Naive thymus-derived CD4-positive, alpha-beta T cell (primary cell): ENCODE measurements at regions of chr22 and their contacts with region 1.

Region 1: GRCh38 chr22:50507991-50508884 is at the start of gene NCAPH2:
- DNase-seq: peak; percentile 95 to 99 (median 97)
- ATAC-seq: peak; percentile 86
- H3K4me3 ChIP-seq: peak within 1 kb of the TSS; percentile 91
- H3K4me3 Mint-ChIP-seq: peak within 1 kb of the TSS; percentile 88 to 97 (median 94)
- H3K27ac ChIP-seq: peak within 1 kb of the TSS; percentile 99
- H3K27ac Mint-ChIP-seq: peak within 1 kb of the TSS; percentile 89 to 99 (median 98)
- H3K4me1 ChIP-seq: peaks cover 19 to 26% of the 10 kb centered on the region in 2 donors
- H3K4me1 Mint-ChIP-seq: peaks cover 14 to 33% (median 27%) of the 10 kb centered on the region in 7 donors
- H3K27me3 ChIP-seq: no peaks in the 10 kb centered on the region
- H3K27me3 Mint-ChIP-seq: no peaks in the 10 kb centered on the region
- total RNA-seq, gene NCAPH2: 74.3 to 135 (median 91.1) TPM

Region 2: DNA sequence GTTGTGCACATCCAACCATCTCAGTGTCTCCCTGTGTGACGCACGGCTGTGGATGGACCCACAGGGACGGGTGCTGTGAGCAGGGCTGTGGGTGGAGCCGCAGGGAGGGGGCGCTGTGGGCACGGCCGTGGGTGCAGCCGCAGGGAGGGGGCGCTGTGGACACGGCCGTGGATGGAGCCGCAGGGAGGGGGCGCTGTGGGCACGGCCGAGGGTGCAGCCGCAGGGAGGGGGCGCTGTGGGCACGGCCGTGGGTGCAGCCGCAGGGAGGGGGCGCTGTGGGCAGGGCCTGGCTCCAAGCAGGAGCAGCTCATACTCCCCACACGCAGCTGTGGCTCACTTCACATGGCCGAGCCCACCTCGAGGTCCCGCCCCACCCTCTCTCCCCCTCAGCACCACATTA is 232.1 kb before region 1 on chr22:
- CTCF ChIA-PET with region 1: no interaction called
- POLR2A ChIA-PET with region 1: no interaction called
- intact Hi-C with region 1: loop called (anchors 2 to 10 kb)
- DNase-seq: peak in 2 of 9 donors; percentile 22 to 27
- ATAC-seq: peak; percentile 86
- H3K4me3 ChIP-seq: no peak overlapping the region
- H3K4me3 Mint-ChIP-seq: no peak overlapping the region
- H3K27ac ChIP-seq: no peak overlapping the region
- H3K27ac Mint-ChIP-seq: no peak overlapping the region
- H3K4me1 ChIP-seq: peaks cover 3 to 4% of the 10 kb centered on the region in 2 donors
- H3K4me1 Mint-ChIP-seq: peaks cover 0 to 12% (median 5%) of the 10 kb centered on the region in 7 donors
- H3K27me3 ChIP-seq: no peaks in the 10 kb centered on the region
- H3K27me3 Mint-ChIP-seq: peaks cover 0 to 12% (median 0%) of the 10 kb centered on the region in 5 donors

Region 3: GRCh38 chr22:50474668-50475492 is 33.4 kb before region 1 on chr22 and contains the start of gene SBF1:
- CTCF ChIA-PET with region 1: interaction called, 7 read pairs
- POLR2A ChIA-PET with region 1: interaction called, 13 read pairs
- intact Hi-C with region 1: loop called in 1 of 2 experiments (anchors 1 kb)
- DNase-seq: peak; percentile 75 to 94 (median 85)
- ATAC-seq: peak; percentile 89
- H3K4me3 ChIP-seq: peak within 1 kb of the TSS; percentile 72
- H3K4me3 Mint-ChIP-seq: peak within 1 kb of the TSS; percentile 93 to 100 (median 96)
- H3K27ac ChIP-seq: peak within 1 kb of the TSS; percentile 90
- H3K27ac Mint-ChIP-seq: peak within 1 kb of the TSS; percentile 91 to 97 (median 93)
- H3K4me1 ChIP-seq: peaks cover 39 to 42% of the 10 kb centered on the region in 2 donors
- H3K4me1 Mint-ChIP-seq: peaks cover 29 to 56% (median 47%) of the 10 kb centered on the region in 7 donors
- H3K27me3 ChIP-seq: no peaks in the 10 kb centered on the region
- H3K27me3 Mint-ChIP-seq: peaks cover 0 to 19% (median 0%) of the 10 kb centered on the region in 5 donors
- total RNA-seq, gene SBF1: 161 to 209 (median 181) TPM

Region 4: GRCh38 chr22:50530877-50531545 is 22.8 kb after region 1 on chr22:
- CTCF ChIA-PET with region 1: interaction called, 25 read pairs
- POLR2A ChIA-PET with region 1: interaction called, 116 read pairs
- intact Hi-C with region 1: loop called in 1 of 2 experiments (anchors 1 kb)
- DNase-seq: peak in 7 of 9 donors; percentile 46 to 85 (median 57)
- ATAC-seq: peak; percentile 60
- H3K4me3 ChIP-seq: peak overlapping the region; percentile 86
- H3K4me3 Mint-ChIP-seq: peak overlapping the region; percentile 80 to 96 (median 87)
- H3K27ac ChIP-seq: peak overlapping the region; percentile 84
- H3K27ac Mint-ChIP-seq: peak overlapping the region; percentile 67 to 100 (median 90)
- H3K4me1 ChIP-seq: peaks cover 5 to 14% of the 10 kb centered on the region in 2 donors
- H3K4me1 Mint-ChIP-seq: peaks cover 0 to 49% (median 30%) of the 10 kb centered on the region in 7 donors
- H3K27me3 ChIP-seq: no peaks in the 10 kb centered on the region
- H3K27me3 Mint-ChIP-seq: peaks cover 0 to 5% (median 0%) of the 10 kb centered on the region in 5 donors

Region 5: DNA sequence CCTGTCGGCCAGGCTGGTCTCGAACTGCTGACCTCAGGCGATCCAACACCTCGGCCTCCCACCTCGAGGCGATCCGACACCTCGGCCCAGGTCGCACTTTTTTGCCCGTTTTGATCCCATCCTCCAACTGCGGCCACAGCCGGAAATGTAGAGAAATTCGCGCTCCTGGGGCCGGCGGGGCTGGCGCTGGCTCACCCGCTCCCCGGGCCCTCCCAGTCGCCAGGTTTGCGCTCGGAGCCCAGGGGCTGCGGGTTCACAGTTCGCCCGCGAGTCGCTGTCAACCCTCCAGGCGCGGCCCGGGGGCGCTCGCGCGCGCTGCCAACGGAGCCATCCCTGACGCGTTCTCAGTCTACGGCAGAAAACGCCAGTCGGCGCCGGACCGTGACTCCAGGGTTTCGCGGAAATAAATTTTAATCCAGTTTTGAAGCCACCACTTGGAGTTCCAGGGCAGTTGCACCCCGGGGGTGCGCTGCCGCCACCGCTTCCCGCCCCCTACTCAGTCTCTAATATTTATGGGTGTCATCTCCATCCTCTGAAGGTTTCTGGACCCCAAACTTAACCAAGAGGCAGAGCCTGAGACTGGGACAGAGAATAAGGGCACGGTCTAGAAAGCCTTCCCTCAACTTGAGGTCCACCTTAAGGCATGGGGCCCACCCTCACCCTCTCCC is 36.0 kb after region 1 on chr22:
- CTCF ChIA-PET with region 1: no interaction called
- POLR2A ChIA-PET with region 1: interaction called, 15 read pairs
- intact Hi-C with region 1: loop called in 1 of 2 experiments (anchors 1 kb)
- DNase-seq: peak; percentile 60 to 80 (median 71)
- ATAC-seq: peak; percentile 63
- H3K4me3 ChIP-seq: peak overlapping the region; percentile 67
- H3K4me3 Mint-ChIP-seq: peak overlapping the region; percentile 53 to 77 (median 70)
- H3K27ac ChIP-seq: peak overlapping the region; percentile 45
- H3K27ac Mint-ChIP-seq: peak overlapping the region in 6 of 9 donors; percentile 49 to 93 (median 75)
- H3K4me1 ChIP-seq: peaks cover 33 to 40% of the 10 kb centered on the region in 2 donors
- H3K4me1 Mint-ChIP-seq: peaks cover 31 to 59% (median 36%) of the 10 kb centered on the region in 7 donors
- H3K27me3 ChIP-seq: no peaks in the 10 kb centered on the region
- H3K27me3 Mint-ChIP-seq: no peaks in the 10 kb centered on the region